Kidney (tissue), 22 donors: ENCODE measurements at regions of chr11 and their contacts with region 1.

Region 1: GRCh38 chr11:72585762-72586311 is 88.4 kb downstream of the PDE2A start:
- DNase-seq: peak; percentile 69 to 89 (median 86)
- H3K4me3 ChIP-seq: no peak overlapping the region
- H3K27ac ChIP-seq: no peak overlapping the region
- H3K4me1 ChIP-seq: peaks cover 0 to 15% (median 0%) of the 10 kb centered on the region in 3 donors
- H3K27me3 ChIP-seq: peaks cover 16% of the 10 kb centered on the region
- CTCF ChIP-seq: peak; percentile 72

Region 2: DNA sequence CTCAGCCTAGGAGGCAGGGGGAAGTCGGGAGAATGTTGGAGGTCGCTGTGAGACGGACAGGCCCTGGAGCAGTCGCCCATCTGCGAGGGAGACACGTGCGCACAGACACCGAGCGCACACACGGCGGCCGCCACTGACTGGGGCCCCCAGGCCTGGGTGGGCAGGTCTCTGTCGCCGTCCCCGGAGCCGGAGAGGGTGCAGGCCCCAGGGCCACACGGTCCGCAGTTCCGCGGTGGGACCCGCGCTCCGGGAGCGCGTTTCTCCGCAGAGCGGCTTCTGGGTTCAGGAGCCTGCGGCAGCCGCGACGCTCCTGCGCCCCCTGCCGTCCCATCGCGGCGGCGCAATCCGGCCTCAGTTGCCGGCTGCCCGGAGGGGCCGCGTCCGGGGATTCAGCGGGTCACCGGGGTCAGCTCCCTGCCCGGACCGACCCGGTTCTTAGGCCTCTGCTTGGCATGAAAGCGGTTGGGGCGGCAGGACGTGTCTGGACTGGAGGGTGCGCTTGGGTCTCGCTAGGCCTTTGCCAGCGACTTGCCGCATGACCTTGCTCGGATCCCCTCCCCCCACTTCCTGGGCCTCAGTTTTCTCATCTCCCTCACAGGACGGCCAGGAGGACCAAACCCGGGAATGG is 57.2 kb after region 1 on chr11:
- intact Hi-C with region 1: loop called (anchors 5 kb)
- DNase-seq: peak; percentile 58 to 82 (median 68)
- H3K4me3 ChIP-seq: peak overlapping the region in 2 of 3 donors; percentile 32
- H3K27ac ChIP-seq: no peak overlapping the region
- H3K4me1 ChIP-seq: no peaks in the 10 kb centered on the region
- H3K27me3 ChIP-seq: peaks cover 15% of the 10 kb centered on the region
- CTCF ChIP-seq: peak; percentile 92

Region 3: DNA sequence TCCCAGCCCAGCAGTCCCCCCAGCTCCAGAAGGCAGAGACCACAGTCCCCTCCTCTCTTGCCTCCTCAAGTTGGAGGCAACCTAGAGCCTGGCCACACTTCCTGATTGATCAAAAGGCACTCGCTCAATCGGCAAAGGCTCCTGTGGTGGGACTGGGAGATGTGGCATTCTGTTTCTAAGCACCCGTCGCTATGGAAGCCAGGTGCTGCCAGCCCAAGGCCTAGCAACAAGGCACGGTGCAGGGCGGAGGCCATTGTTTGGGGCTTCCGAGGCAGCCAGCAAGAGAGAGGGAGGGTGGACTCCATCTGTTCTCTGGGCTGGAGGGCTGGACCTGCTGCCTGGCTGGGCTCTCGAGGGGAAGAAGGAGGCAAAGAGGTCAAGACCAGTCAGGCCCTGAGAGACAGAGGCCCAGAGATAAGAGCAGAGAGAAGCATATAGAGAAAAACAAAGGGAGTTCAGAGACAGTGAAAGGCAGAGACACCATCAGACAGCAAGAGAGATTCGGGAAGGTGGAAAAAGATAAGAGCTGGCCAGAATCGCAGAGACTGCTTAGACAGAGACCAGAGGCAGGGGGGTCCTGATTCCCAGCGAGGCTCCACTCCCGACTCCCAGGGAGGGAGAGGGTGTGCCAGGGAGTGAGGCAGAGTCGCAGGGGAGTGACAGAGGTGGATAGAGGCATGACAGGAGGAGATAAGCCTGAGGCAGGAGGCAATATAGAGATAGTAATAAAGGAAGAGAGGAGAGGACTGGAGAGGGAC is 67.2 kb after region 1 on chr11:
- intact Hi-C with region 1: no loop called
- DNase-seq: peak in 1 of 5 donors; percentile 47
- H3K4me3 ChIP-seq: no peak overlapping the region
- H3K27ac ChIP-seq: no peak overlapping the region
- H3K4me1 ChIP-seq: no peaks in the 10 kb centered on the region
- H3K27me3 ChIP-seq: no peaks in the 10 kb centered on the region
- CTCF ChIP-seq: no peak